ENCODE measurements at regions of chrX and their contacts with region 1.

Region 1: GRCh38 chrX:149962859-149963757 is 24.8 kb upstream of the EOLA2 start:
- DNase-seq: peak; percentile 45
- ATAC-seq: peak; percentile 100
- H3K4me3 ChIP-seq: no peak overlapping the region
- H3K27ac ChIP-seq: no peak overlapping the region
- H3K4me1 ChIP-seq: peaks cover 0 to 2% of the 10 kb centered on the region in 2 experiments; a peak in 1 of 4 replicates
- H3K27me3 ChIP-seq: no peaks in the 10 kb centered on the region
- CTCF ChIP-seq: peak; percentile 82 to 93 (median 82); a peak in 5 of 6 replicates
- POLR2A ChIP-seq: no peak
- RAD21 ChIP-seq: peak; percentile 95

Region 2: DNA sequence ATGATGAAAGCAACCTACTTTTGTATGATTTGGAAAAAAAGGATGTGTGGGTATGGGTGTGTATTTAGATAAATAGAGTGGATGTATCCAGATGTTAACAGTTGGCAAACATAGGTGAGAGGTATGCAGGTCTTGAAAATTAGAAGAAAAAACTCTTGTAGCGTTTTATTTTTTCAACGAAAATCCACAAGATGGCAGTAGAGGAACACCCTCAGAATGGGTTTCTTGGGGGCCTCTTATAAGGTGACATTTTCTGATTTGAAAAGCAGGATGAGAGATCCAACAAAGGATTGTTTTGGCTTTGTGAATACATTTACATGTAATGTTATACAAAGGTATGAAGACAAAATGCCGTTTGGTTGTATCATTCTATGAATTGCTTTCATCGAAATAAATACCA is 1913.7 kb before region 1 on chrX:
- CTCF ChIA-PET with region 1: no interaction called
- POLR2A ChIA-PET with region 1: no interaction called
- RAD21 ChIA-PET with region 1: no interaction called
- intact Hi-C with region 1: loop called (anchors 5 kb)
- DNase-seq: peak; percentile 1
- ATAC-seq: peak; percentile 52; the same call in 1 of the 2 replicates
- H3K4me3 ChIP-seq: no peak overlapping the region
- H3K27ac ChIP-seq: no peak overlapping the region
- H3K4me1 ChIP-seq: no peaks in the 10 kb centered on the region
- H3K27me3 ChIP-seq: no peaks in the 10 kb centered on the region
- CTCF ChIP-seq: peak; percentile 18 to 55 (median 24); a peak in 3 of 6 replicates
- POLR2A ChIP-seq: no peak
- RAD21 ChIP-seq: peak; percentile 45; the same call in 1 of the 2 replicates

Region 3: DNA sequence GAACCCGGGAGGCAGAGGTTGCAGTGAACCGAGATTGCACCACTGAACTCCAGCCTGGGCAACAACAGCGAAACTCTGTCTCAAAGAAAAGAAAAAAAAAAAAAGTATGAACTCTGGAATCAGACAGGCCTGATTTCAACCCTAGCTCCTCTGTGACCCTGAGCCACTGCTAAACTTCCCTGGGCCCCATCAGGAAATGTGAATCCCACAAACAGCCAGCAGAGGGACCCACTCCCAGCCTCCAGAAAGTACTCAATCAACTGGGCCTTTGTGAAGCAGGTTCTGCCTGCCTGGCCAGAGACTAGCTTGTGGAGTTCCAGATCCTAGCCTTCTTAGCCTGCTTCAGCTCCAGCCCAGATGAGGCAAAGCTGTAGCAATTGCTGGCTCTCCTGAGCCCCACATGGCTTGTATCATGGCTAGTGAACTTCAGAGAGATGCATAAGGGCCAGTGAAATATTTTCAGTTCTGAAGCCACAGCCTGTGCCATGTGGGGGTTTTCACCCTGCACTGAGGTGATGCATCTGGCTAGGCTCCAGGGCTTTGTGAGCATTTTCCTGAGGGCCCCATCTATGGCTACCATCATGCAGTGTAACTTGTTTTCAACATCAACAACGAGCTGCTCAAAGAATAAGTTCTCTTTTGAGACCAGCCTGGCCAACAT is 450.8 kb before region 1 on chrX:
- CTCF ChIA-PET with region 1: interaction called, 14 read pairs
- POLR2A ChIA-PET with region 1: no interaction called
- RAD21 ChIA-PET with region 1: no interaction called
- intact Hi-C with region 1: loop called (anchors 1 kb)
- DNase-seq: no peak
- ATAC-seq: peak; percentile 81
- H3K4me3 ChIP-seq: no peak overlapping the region
- H3K27ac ChIP-seq: no peak overlapping the region
- H3K4me1 ChIP-seq: peaks cover 11 to 29% of the 10 kb centered on the region in 2 experiments
- H3K27me3 ChIP-seq: no peaks in the 10 kb centered on the region
- CTCF ChIP-seq: peak; percentile 47 to 56 (median 54); a peak in 5 of 6 replicates
- POLR2A ChIP-seq: no peak
- RAD21 ChIP-seq: peak; percentile 45

Region 4: DNA sequence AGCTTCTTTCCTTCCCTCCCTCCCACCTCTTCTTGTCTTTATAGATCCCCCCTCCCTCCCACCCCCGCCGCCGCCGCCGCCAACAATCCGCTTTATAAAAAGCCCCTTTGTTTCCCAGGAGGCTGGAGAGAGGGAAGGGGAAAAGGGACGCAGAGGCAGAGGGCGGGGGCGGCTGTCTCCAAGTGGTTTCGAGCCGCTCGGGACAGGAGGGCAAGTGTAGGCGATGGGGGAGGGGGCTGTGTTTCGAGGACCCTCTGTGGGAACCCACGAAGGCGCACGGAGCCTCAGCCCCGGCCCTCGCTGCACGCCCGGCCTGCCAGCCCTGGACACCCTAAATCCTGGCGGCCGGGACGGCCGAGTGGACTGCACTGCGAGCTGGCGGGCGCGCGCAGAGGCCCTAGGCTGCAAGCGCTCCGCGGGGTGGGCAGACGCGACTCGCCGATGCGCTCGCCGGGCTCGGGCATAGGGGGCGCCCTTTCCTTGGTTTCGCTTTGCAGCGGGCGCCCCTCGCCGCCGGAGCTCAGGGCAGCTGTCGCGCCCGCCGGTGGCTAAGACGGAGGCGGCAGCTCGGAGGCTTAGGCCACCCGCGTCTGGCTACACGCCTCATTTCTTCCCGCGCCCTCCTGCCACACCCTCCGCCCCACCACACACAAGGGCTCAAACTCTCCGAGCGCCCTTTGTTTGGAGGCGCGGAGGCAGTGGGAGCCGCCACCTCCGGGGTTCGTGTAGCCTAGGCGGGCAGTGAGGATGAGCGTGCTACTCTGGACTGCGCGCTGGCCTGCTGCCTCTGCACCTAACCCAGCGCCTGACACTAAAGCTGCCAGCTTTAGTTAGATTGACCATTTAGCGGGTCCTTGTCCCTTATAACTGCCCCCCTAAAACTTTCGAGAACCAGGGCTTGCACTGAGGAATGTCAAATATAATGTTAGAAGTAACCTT is 402.2 kb after region 1 on chrX:
- CTCF ChIA-PET with region 1: interaction called, 3 read pairs
- POLR2A ChIA-PET with region 1: interaction called, 3 read pairs
- RAD21 ChIA-PET with region 1: no interaction called
- intact Hi-C with region 1: loop called (anchors 5 kb)
- DNase-seq: peak; percentile 35
- ATAC-seq: peak; percentile 63
- H3K4me3 ChIP-seq: peak overlapping the region; percentile 55 to 64
- H3K27ac ChIP-seq: no peak overlapping the region
- H3K4me1 ChIP-seq: peaks cover 2 to 10% of the 10 kb centered on the region in 2 experiments; a peak in 1 of 4 replicates
- H3K27me3 ChIP-seq: no peaks in the 10 kb centered on the region
- CTCF ChIP-seq: peak in 2 of 3 experiments; percentile 40 to 55; a peak in 4 of 6 replicates
- POLR2A ChIP-seq: no peak
- RAD21 ChIP-seq: no peak

Region 5: DNA sequence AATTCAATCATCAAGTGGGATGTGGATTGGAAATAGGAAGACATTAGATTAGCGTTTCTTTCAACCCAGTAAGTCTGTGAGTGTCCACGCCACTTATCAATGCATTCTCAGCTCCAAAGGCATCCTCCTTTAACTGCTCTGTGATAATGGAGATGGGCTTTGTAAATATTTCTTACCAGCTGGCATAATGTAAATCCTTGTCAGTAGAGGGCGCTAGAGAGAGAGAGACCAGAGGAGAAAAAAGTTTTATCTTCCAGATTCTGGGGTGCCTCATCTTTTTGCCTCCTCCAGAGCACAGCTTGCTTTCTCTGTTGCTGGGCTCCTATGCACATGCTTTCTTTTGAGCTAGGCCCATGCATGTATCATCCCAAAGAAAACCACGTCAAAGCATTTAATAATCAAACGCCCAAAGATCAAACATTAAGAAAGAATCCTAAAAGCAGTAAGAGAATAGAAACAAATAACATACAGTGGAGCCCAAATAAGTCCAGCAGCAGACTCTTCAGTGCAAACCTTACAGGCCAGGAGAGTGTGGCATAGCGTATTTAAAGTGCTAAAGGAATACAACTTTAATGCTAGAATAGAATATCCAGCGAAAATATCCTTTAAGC is 720.5 kb after region 1 on chrX:
- CTCF ChIA-PET with region 1: no interaction called
- POLR2A ChIA-PET with region 1: no interaction called
- RAD21 ChIA-PET with region 1: no interaction called
- intact Hi-C with region 1: loop called (anchors 2 kb)
- DNase-seq: peak; percentile 12
- ATAC-seq: peak; percentile 69
- H3K4me3 ChIP-seq: no peak overlapping the region
- H3K27ac ChIP-seq: no peak overlapping the region
- H3K4me1 ChIP-seq: peaks cover 0 to 3% of the 10 kb centered on the region in 2 experiments; a peak in 2 of 4 replicates
- H3K27me3 ChIP-seq: no peaks in the 10 kb centered on the region
- CTCF ChIP-seq: peak; percentile 39 to 61 (median 55); a peak in 5 of 6 replicates
- POLR2A ChIP-seq: no peak
- RAD21 ChIP-seq: peak; percentile 44